H1 (cell line): ENCODE measurements at regions of chr9 and their contacts with region 1.

Region 1: GRCh38 chr9:21210311-21210710 is 3.4 kb upstream of the IFNA10 start:
- DNase-seq: no peak
- H3K4me3 ChIP-seq: no peak overlapping the region
- H3K27ac ChIP-seq: no peak overlapping the region
- H3K4me1 ChIP-seq: no peaks in the 10 kb centered on the region
- H3K27me3 ChIP-seq: no peaks in the 10 kb centered on the region
- CTCF ChIP-seq: no peak
- EP300 ChIP-seq: no peak
- POLR2A ChIP-seq: no peak
- RAD21 ChIP-seq: no peak

Region 2: GRCh38 chr9:21234153-21234687 is 23.9 kb after region 1 on chr9:
- CTCF ChIA-PET with region 1: interaction called, 17 read pairs
- POLR2A ChIA-PET with region 1: no interaction called
- DNase-seq: no peak
- H3K4me3 ChIP-seq: no peak overlapping the region
- H3K27ac ChIP-seq: no peak overlapping the region
- H3K4me1 ChIP-seq: no peaks in the 10 kb centered on the region
- H3K27me3 ChIP-seq: no peaks in the 10 kb centered on the region
- CTCF ChIP-seq: no peak
- EP300 ChIP-seq: no peak
- POLR2A ChIP-seq: no peak
- RAD21 ChIP-seq: no peak